CD4-positive, alpha-beta memory T cell (primary cell): ENCODE measurements at regions of chr15 and their contacts with region 1.

Region 1: DNA sequence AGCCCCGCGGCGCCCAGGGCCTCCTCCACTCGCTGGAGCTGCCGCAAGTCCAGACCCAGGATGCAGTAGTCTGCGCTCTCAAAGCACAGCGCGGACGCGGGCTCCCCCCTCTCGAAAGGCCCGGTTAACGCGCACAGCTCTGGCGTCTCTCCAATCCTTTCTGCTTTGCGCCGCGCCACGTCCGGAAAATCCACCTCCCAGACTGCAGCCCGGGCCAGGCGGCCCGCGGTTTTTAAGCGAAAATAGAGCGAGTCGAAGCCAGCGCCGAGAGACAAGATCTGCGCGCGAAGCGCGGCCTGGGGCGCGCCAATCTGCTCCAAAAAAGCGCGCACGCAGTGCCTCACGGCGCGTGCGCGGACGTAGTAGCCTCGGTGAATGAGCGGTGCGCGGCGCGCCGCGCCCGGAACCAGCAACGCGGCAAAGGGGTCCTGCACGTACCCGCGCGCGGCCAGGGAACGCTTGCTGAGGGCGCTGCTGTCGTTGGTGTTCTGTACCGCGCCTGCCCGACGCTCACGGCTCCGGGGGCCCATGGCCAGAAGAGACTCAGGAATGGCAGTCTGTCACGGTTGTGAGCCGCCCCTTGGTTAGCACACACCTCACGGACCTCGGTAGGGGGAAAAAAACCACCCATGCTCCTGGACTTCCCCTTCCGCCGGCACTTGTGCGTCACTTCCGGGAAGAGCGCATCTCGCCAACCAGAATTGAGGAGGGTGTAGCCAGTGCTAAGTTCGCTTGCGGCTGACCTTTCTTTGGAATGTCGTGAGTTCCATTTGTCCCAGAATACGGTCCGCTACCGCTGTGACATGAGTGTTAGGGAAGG is at the start of gene LCMT2:
- DNase-seq: peak; percentile 91 to 95 (median 94)
- H3K4me3 ChIP-seq: peak within 1 kb of the TSS; percentile 67 to 91
- H3K4me3 Mint-ChIP-seq: peak within 1 kb of the TSS; percentile 94 to 99 (median 96)
- H3K27ac ChIP-seq: peak within 1 kb of the TSS; percentile 90
- H3K27ac Mint-ChIP-seq: peak within 1 kb of the TSS; percentile 98 to 100 (median 99)
- H3K4me1 ChIP-seq: peaks cover 22% of the 10 kb centered on the region
- H3K4me1 Mint-ChIP-seq: peaks cover 16 to 50% (median 31%) of the 10 kb centered on the region in 4 donors
- H3K27me3 ChIP-seq: no peaks in the 10 kb centered on the region
- H3K27me3 Mint-ChIP-seq: peaks cover 0 to 3% of the 10 kb centered on the region in 2 donors
- total RNA-seq, gene LCMT2: 17.0 to 17.8 TPM

Region 2: DNA sequence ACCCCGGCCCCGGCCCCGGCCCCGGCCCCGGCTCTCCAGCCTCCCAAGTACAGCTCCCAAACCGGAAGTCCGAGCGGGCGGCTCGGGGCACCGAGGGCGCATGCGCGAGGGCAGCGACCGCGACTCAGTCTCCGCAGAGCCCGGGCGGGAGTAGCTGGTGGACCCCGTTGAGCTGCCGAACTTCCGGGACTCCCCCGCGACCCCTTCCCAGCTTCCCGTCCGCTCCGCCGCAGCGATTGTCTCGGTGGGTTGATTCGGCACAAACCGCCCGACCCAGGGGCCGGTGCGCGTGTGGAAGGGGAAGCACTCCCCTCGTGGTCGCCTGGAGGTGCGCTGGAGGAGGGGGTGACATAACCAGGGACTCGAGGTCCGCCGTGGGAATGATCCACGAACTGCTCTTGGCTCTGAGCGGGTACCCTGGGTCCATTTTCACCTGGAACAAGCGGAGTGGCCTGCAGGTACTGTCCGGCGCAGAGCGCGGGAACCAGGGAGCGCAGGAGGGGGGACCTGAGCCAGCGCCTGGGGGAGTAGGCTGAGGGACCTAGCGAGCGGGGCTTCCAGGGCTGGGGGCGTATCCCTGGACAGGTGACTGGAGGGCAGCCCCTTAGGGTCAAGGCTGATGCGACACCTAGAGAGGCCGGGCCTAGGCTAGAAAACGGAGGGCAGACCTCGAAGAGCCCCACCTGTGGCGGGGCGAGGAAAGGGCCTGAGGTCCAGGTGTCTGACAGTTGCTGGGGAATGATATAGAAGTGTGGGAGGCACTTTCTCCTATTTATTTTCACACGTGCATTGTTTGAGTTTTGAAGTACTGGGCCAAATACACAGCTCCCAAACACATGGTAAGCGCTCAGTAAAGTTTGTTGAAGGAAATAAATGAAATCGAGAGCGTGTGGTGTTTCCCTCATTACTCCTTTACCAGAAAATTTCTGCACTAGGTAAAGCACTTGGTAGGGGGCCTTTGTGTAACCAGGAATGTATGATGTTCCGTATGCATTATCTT is 41.1 kb after region 1 on chr15 and contains the starts of genes TUBGCP4 and ZSCAN29:
- CTCF ChIA-PET with region 1: interaction called, 3 read pairs
- POLR2A ChIA-PET with region 1: interaction called, 8 read pairs
- intact Hi-C with region 1: loop called (anchors 1 kb)
- DNase-seq: peak; percentile 67 to 76 (median 68)
- H3K4me3 ChIP-seq: peak within 1 kb of the TSS; percentile 49 to 53
- H3K4me3 Mint-ChIP-seq: peak within 1 kb of the TSS; percentile 88 to 94 (median 92)
- H3K27ac ChIP-seq: peak within 1 kb of the TSS; percentile 70
- H3K27ac Mint-ChIP-seq: peak within 1 kb of the TSS; percentile 79 to 94 (median 90)
- H3K4me1 ChIP-seq: peaks cover 33% of the 10 kb centered on the region
- H3K4me1 Mint-ChIP-seq: peaks cover 45 to 65% (median 50%) of the 10 kb centered on the region in 4 donors
- H3K27me3 ChIP-seq: no peaks in the 10 kb centered on the region
- H3K27me3 Mint-ChIP-seq: no peaks in the 10 kb centered on the region
- total RNA-seq, gene TUBGCP4: 23.6 to 23.9 TPM
- total RNA-seq, gene ZSCAN29: 34.8 to 36.4 TPM

Region 3: GRCh38 chr15:43541785-43542184 is 211.6 kb after region 1 on chr15:
- CTCF ChIA-PET with region 1: no interaction called
- POLR2A ChIA-PET with region 1: no interaction called
- intact Hi-C with region 1: no loop called
- DNase-seq: no peak
- H3K4me3 ChIP-seq: no peak overlapping the region
- H3K4me3 Mint-ChIP-seq: no peak overlapping the region
- H3K27ac ChIP-seq: no peak overlapping the region
- H3K27ac Mint-ChIP-seq: peak overlapping the region in 1 of 7 donors; percentile 14
- H3K4me1 ChIP-seq: no peaks in the 10 kb centered on the region
- H3K4me1 Mint-ChIP-seq: peaks cover 0 to 5% (median 0%) of the 10 kb centered on the region in 4 donors
- H3K27me3 ChIP-seq: no peaks in the 10 kb centered on the region
- H3K27me3 Mint-ChIP-seq: no peaks in the 10 kb centered on the region